ENCODE measurements at regions of chr15 and their contacts with region 1.

Region 1: DNA sequence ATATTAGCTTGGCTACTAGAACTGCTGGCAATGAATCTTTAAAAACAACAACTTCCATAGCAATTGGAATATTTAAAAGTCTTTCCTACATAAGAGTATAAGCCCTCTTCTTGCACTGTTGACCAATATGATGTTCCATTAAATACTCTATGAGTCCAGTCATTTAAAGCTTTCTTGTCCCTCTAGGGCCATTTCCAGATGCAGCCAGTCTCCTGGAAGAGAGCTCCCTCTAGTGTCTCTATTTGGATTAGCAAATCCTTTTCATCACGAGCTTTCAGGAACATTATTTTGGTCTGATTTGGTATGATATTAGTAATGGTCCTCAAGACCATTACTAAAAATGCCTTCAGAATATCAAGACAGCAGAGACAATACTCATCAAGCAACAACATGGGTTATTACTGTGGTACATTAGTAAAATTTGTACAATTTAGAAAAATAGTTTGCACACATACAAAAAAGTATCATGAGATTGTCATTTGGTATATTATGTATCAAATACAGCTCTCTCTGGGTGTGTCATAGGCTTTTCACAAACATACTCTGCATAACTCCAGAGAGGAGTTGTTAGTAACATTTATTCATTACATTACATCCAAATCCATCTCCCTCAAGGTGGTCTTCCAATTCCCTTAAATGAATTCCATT is 101.3 kb downstream of the DPH6 start:
- DNase-seq: no peak
- H3K4me3 ChIP-seq: no peak overlapping the region
- H3K27ac ChIP-seq: no peak overlapping the region
- H3K4me1 ChIP-seq: peaks cover 0 to 14% (median 9%) of the 10 kb centered on the region in 4 donors
- H3K27me3 ChIP-seq: no peaks in the 10 kb centered on the region
- CTCF ChIP-seq: peak; percentile 54 to 77 (median 66)
- EP300 ChIP-seq: no peak
- POLR2A ChIP-seq: no peak

Region 2: GRCh38 chr15:35078221-35078915 is 366.3 kb before region 1 on chr15:
- intact Hi-C with region 1: loop called (anchors 2 kb)
- DNase-seq: no peak
- H3K4me3 ChIP-seq: no peak overlapping the region
- H3K27ac ChIP-seq: no peak overlapping the region
- H3K4me1 ChIP-seq: peaks cover 0 to 16% (median 6%) of the 10 kb centered on the region in 4 donors
- H3K27me3 ChIP-seq: no peaks in the 10 kb centered on the region
- CTCF ChIP-seq: peak; percentile 35 to 80 (median 66)
- EP300 ChIP-seq: no peak
- POLR2A ChIP-seq: no peak